CD8-positive, alpha-beta T cell (primary cell): ENCODE measurements at regions of chr16 and their contacts with region 1.

Region 1: DNA sequence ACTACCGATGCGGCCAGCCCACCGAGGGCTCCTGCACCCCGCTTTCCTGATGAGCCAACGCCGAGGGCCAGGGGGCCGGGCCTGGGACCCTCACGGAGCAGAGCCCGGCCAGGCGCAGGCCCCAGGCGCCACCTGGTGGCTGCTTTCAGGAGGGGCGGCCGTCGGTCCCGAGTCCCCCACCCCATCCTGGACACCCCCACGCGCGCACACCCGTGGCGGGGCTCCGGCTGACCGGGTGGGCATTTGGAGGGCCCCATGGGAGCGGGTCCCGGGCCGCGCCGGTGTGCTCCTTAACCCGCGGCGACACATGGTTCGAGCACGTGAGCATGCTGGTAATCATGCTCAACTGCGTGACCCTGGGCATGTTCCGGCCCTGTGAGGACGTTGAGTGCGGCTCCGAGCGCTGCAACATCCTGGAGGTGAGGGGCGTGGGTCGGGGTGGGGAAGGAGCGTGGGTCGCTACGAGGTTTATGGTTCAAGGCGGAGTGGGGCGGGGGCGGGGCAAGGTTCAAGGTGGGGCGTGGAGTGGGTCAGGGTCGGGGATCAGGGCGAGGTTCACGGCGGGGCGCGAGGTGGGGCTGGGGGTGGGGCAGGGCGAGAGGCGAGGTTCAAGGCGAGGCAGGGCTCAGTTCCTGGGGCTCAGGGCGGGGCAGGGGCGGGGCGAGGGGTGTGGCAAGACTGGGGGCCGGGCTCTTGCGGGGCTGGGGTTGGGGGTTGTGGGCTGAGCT is 30.2 kb downstream of the TPSG1 start:
- DNase-seq: peak in 5 of 9 experiments; percentile 12 to 51 (median 35)
- ATAC-seq: no peak
- H3K4me3 ChIP-seq: no peak overlapping the region
- H3K4me3 Mint-ChIP-seq: no peak overlapping the region
- H3K27ac ChIP-seq: no peak overlapping the region
- H3K27ac Mint-ChIP-seq: no peak overlapping the region
- H3K4me1 ChIP-seq: no peaks in the 10 kb centered on the region
- H3K4me1 Mint-ChIP-seq: no peaks in the 10 kb centered on the region
- H3K27me3 ChIP-seq: no peaks in the 10 kb centered on the region
- H3K27me3 Mint-ChIP-seq: peaks cover 2% of the 10 kb centered on the region
- CTCF ChIP-seq: peak; percentile 44

Region 2: GRCh38 chr16:813204-813915 is 381.5 kb before region 1 on chr16:
- CTCF ChIA-PET with region 1: no interaction called
- POLR2A ChIA-PET with region 1: no interaction called
- intact Hi-C with region 1: loop called in 1 of 2 experiments (anchors 1 kb)
- DNase-seq: peak in 8 of 9 experiments; percentile 22 to 72 (median 58)
- ATAC-seq: peak; percentile 87
- H3K4me3 ChIP-seq: no peak overlapping the region
- H3K4me3 Mint-ChIP-seq: no peak overlapping the region
- H3K27ac ChIP-seq: no peak overlapping the region
- H3K27ac Mint-ChIP-seq: no peak overlapping the region
- H3K4me1 ChIP-seq: peaks cover 13% of the 10 kb centered on the region
- H3K4me1 Mint-ChIP-seq: peaks cover 9% of the 10 kb centered on the region
- H3K27me3 ChIP-seq: peaks cover 5 to 30% of the 10 kb centered on the region in 2 experiments
- H3K27me3 Mint-ChIP-seq: peaks cover 17% of the 10 kb centered on the region
- CTCF ChIP-seq: peak; percentile 65

Region 3: DNA sequence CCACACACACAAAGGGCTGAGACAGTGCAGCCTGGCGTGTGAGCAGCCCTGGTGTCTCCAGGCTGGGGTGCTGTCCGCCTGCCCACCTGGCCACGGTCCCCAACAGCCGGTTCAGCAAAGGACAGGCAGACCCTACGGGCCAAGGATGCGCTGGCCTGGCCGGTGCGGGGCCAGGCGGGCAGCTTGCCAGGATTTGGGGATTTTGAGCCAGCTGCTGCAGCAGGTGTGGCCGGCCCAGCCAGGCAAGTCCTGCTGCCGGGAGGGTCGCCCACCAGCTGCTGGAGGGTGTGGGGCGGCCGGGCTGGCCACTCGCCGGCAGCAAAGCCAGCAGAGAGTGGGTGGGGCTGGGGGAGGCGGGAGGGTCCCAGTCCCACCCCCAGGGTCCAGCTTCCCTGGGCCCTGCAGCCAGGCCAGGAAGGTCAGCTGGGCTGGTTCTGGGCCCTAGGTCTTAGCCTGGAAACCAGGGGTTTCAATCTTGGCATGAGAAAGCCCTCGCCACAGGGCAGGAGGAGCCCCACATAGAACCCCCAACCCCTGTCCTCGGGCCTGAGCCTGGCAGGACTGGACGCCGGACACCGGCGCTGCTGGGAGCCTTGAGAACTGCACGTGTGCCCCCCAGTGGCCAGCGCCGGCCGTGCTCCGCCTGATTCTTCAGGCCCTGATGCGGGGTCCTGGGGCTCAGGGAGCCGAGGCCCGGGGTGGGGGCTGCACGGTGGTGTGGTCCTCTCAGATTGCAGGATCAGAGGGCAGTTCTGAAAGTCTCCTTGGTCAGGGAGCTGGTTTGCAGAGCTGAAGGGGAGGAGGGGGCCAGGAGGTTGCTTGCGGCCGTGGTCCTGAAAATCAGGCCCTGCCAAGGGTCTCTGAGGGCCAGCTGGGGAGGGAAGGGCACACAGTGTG is 139.9 kb before region 1 on chr16:
- CTCF ChIA-PET with region 1: no interaction called
- POLR2A ChIA-PET with region 1: no interaction called
- intact Hi-C with region 1: loop called in 1 of 2 experiments (anchors 1 kb)
- DNase-seq: peak in 6 of 9 experiments; percentile 24 to 68 (median 38)
- ATAC-seq: no peak
- H3K4me3 ChIP-seq: no peak overlapping the region
- H3K4me3 Mint-ChIP-seq: no peak overlapping the region
- H3K27ac ChIP-seq: no peak overlapping the region
- H3K27ac Mint-ChIP-seq: no peak overlapping the region
- H3K4me1 ChIP-seq: peaks cover 4% of the 10 kb centered on the region
- H3K4me1 Mint-ChIP-seq: no peaks in the 10 kb centered on the region
- H3K27me3 ChIP-seq: peaks cover 0 to 3% of the 10 kb centered on the region in 2 experiments
- H3K27me3 Mint-ChIP-seq: no peaks in the 10 kb centered on the region
- CTCF ChIP-seq: peak; percentile 44

Region 4: GRCh38 chr16:1093284-1094123 is 101.3 kb before region 1 on chr16:
- CTCF ChIA-PET with region 1: no interaction called
- POLR2A ChIA-PET with region 1: no interaction called
- intact Hi-C with region 1: no loop called
- DNase-seq: no peak
- ATAC-seq: no peak
- H3K4me3 ChIP-seq: no peak overlapping the region
- H3K4me3 Mint-ChIP-seq: no peak overlapping the region
- H3K27ac ChIP-seq: no peak overlapping the region
- H3K27ac Mint-ChIP-seq: no peak overlapping the region
- H3K4me1 ChIP-seq: no peaks in the 10 kb centered on the region
- H3K4me1 Mint-ChIP-seq: no peaks in the 10 kb centered on the region
- H3K27me3 ChIP-seq: peaks cover 0 to 13% of the 10 kb centered on the region in 2 experiments
- H3K27me3 Mint-ChIP-seq: no peaks in the 10 kb centered on the region
- CTCF ChIP-seq: no peak

Region 5: GRCh38 chr16:1105888-1106620 is 88.8 kb before region 1 on chr16:
- CTCF ChIA-PET with region 1: interaction called, 3 read pairs
- POLR2A ChIA-PET with region 1: no interaction called
- intact Hi-C with region 1: loop called in 1 of 2 experiments (anchors 1 kb)
- DNase-seq: peak in 8 of 9 experiments; percentile 9 to 58 (median 42)
- ATAC-seq: peak; percentile 53
- H3K4me3 ChIP-seq: no peak overlapping the region
- H3K4me3 Mint-ChIP-seq: no peak overlapping the region
- H3K27ac ChIP-seq: no peak overlapping the region
- H3K27ac Mint-ChIP-seq: no peak overlapping the region
- H3K4me1 ChIP-seq: no peaks in the 10 kb centered on the region
- H3K4me1 Mint-ChIP-seq: no peaks in the 10 kb centered on the region
- H3K27me3 ChIP-seq: peaks cover 9 to 15% of the 10 kb centered on the region in 2 experiments
- H3K27me3 Mint-ChIP-seq: peaks cover 8% of the 10 kb centered on the region
- CTCF ChIP-seq: peak; percentile 31

Region 6: DNA sequence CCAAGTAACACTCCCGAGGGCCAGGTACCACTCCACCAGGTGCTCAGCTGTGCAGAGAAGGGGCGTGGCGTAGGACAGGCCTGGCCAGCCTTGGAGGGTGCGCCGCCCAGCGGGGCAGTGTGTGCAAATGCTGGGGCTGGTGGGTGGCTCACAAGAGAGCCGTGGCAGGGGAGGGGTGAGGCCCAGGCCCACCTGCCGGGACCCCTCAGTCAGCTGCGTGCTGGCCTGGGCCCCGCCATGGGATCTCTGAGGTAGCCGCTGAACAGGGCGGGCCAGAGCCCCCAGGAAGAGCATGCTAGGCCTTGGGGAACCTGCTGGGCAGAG is 21.4 kb after region 1 on chr16:
- CTCF ChIA-PET with region 1: no interaction called
- POLR2A ChIA-PET with region 1: no interaction called
- intact Hi-C with region 1: no loop called
- DNase-seq: no peak
- ATAC-seq: no peak
- H3K4me3 ChIP-seq: no peak overlapping the region
- H3K4me3 Mint-ChIP-seq: no peak overlapping the region
- H3K27ac ChIP-seq: no peak overlapping the region
- H3K27ac Mint-ChIP-seq: no peak overlapping the region
- H3K4me1 ChIP-seq: no peaks in the 10 kb centered on the region
- H3K4me1 Mint-ChIP-seq: no peaks in the 10 kb centered on the region
- H3K27me3 ChIP-seq: no peaks in the 10 kb centered on the region
- H3K27me3 Mint-ChIP-seq: no peaks in the 10 kb centered on the region
- CTCF ChIP-seq: no peak